ENCODE measurements at regions of chr2 and their contacts with region 1.

Region 1: DNA sequence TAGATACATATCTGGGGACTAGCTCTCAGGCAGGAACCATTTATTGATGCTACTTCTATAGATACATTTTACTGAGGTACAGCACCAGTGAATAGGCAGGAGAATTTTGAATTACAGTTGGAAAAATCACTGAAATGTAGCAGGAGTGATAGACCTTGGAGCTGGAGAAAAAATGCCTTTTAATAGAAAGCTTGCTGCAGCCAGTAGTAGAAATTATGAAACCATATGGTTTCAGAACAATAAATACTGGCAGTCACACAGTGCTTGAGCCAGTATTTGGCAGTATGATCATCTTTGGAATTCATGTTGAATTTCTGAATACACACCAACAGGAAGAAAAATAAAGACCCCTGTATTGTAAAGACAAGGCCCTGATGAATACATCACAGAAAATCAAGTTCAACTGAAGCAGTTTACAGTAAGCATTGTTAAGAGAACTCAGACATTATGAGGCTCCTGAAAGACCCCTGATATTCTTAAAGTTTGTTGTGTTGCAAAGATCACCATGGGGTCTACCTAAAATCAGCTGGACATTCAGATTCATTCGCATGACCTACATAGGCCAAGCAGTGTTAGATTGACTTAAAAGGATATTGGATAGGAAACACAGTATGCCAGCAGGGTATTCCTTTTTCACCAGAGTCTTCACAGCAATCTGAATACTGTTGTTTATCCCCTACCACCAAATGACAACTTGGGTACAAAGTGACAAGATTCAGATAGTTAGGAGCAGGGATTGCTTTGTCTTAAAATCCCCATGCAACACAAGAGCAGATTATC is 139.0 kb downstream of the EHBP1 start:
- DNase-seq: no peak
- H3K4me3 ChIP-seq: no peak overlapping the region
- H3K27ac ChIP-seq: no peak overlapping the region
- H3K4me1 ChIP-seq: no peaks in the 10 kb centered on the region
- H3K27me3 ChIP-seq: no peaks in the 10 kb centered on the region
- CTCF ChIP-seq: no peak
- EP300 ChIP-seq: no peak
- POLR2A ChIP-seq: no peak
- RAD21 ChIP-seq: no peak

Region 2: DNA sequence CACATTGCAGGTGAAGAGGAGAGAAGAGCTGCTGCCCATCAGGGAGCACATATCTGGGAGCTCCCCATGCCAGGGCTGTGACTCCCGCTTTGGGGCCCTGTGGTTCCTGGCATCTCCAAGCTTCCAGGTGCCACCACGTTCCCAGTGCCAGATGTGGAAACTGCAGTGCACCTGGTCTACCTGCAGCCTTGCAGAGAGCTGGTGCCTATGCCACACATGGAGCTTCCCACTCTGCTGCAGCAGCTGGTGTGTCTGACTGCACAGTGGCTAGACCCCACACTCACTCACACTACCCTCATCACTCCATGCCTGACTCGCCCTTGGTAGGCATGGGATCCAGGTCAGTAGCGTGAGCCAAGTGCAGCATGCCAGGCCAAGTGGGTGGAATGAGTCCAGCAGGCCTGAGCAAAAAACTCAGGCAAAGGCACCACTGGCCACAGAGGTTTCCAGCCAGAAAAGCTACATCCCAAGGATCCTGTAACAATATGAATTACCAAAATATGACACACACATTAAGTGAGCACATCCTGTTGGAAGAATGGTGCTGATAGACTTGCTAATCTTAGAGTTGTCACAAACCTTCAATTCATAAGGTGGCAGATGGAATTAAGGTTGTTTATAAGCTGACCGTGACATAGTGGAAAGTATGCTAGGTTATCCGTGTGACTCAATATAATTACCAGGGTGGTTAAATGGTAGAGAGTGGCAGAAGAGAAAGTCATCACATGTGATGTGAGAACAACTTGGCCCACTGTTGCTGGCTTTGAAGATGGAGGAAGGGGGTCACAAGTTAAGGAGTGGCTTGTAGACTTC is 11.9 kb after region 1 on chr2:
- CTCF ChIA-PET with region 1: interaction called, 14 read pairs
- POLR2A ChIA-PET with region 1: no interaction called
- DNase-seq: no peak
- H3K4me3 ChIP-seq: no peak overlapping the region
- H3K27ac ChIP-seq: 0 out of 2 replicates have a peak overlapping the region, but pooled peaks have one; percentile 1
- H3K4me1 ChIP-seq: peaks cover 0 to 5% (median 0%) of the 10 kb centered on the region in 4 experiments; a peak in 1 of 7 replicates
- H3K27me3 ChIP-seq: no peaks in the 10 kb centered on the region
- CTCF ChIP-seq: no peak
- EP300 ChIP-seq: no peak
- POLR2A ChIP-seq: no peak
- RAD21 ChIP-seq: no peak

Region 3: GRCh38 chr2:62871506-62871905 is 27.0 kb after region 1 on chr2:
- CTCF ChIA-PET with region 1: no interaction called
- POLR2A ChIA-PET with region 1: no interaction called
- DNase-seq: no peak
- H3K4me3 ChIP-seq: no peak overlapping the region
- H3K27ac ChIP-seq: no peak overlapping the region
- H3K4me1 ChIP-seq: no peaks in the 10 kb centered on the region
- H3K27me3 ChIP-seq: no peaks in the 10 kb centered on the region
- CTCF ChIP-seq: no peak
- EP300 ChIP-seq: no peak
- POLR2A ChIP-seq: no peak
- RAD21 ChIP-seq: no peak

Measured in H1 (cell line).